GM12878 (cell line): ENCODE measurements at regions of chr1 and their contacts with region 1.

Region 1: DNA sequence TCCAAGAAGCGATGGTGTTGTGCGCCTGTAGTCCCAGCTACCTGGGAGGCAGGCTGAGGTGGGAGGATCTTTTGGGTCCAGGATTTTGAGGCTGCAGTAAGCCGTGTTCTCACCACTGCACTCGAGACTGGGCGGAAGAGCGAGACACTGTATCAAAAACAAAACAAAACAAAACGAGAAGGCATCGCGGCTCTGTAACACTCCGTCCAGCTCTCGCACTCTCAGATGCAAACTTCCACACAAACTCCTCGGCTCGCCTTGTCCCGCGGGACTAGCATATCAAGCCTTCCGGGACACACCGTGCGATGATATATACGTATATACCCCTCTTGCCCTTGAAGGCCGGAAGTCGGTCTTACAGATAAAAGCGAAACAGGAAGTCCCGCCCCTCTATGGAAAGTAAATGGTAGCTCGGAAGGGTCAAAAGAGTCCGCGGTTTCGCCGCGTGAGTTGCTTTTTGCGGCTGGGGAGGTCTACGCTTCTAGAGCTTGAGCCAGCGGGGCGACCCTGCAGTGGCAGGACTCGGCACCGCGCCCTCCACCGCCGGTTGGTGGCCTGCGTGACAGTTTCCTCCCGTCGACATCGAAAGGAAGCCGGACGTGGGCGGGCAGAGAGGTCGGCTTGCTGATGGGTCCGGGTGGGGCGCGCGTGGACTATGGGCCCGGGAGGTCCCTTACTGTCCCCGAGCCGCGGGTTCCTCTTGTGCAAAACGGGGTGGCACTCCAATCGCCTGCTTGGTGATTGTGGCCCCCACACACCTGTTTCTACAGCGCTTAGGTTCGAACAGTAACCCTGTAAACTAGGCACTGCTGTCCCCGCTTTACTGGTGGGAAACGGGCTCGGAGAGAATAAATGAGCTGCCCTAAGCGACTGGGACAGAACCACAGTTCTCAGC is at the start of gene COA6:
- DNase-seq: peak; percentile 94
- ATAC-seq: peak; percentile 93
- H3K4me3 ChIP-seq: peak within 1 kb of the TSS; percentile 86
- H3K27ac ChIP-seq: peak within 1 kb of the TSS; percentile 95
- H3K4me1 ChIP-seq: peaks cover 6% of the 10 kb centered on the region; the same call in 1 of the 2 replicates
- H3K27me3 ChIP-seq: no peaks in the 10 kb centered on the region; a peak in 1 of 4 replicates
- CTCF ChIP-seq: no peak; a peak in 1 of 6 replicates
- EP300 ChIP-seq: 0 out of 4 replicates have a peak, but pooled peaks of 1 of the 2 experiments have one; percentile 25
- POLR2A ChIP-seq: peak; percentile 90
- RAD21 ChIP-seq: no peak
- polyA plus RNA-seq, gene COA6: 117 to 145 TPM

Region 2: DNA sequence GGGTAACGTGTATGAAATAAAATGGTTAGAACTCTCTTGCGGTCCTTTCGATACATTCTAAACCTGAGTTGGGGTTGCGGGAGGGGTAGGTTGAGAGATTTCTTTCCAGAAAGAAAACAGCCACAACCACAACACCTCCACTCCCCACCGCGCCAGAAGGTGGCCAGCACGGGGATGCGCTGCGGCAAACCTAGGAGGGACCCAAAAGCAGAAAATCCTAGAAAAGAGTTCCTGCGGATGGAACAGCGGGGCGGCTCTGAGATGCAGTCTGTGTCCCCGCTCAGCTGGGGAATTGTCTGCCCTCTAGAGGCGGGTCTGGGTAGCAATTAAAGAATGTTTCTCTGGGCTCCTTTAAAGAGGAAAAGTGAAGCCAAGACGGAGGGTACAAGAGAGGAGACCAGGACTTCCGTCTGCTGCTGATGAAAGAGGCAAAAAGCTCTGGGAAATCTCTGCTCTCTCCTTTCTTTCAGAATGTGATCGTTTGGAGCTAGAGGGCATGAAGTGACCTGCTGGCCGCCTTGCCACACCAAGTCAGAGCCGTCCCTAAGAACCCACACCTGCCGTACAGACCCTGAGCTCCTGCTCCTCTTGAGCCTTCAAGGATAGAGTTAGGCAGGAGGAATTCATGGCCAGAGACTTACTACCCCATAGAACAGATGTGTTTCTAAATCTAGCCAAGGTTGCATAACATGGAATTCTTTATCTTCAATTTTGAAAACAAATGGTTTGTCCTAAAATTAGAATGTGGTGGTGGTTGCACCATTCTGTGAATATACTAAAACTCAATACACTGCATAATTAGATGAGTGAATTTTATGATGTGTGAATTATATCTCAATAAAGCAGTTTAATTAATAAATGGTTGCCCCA is 46.6 kb before region 1 on chr1:
- CTCF ChIA-PET with region 1: interaction called, 11 read pairs
- POLR2A ChIA-PET with region 1: no interaction called
- RAD21 ChIA-PET with region 1: interaction called, 3 read pairs
- SMC1A ChIA-PET with region 1: no interaction called
- in situ Hi-C with region 1: no loop called
- intact Hi-C with region 1: no loop called
- DNase-seq: no peak
- ATAC-seq: peak; percentile 92
- H3K4me3 ChIP-seq: no peak overlapping the region
- H3K27ac ChIP-seq: no peak overlapping the region
- H3K4me1 ChIP-seq: peaks cover 5% of the 10 kb centered on the region
- H3K27me3 ChIP-seq: no peaks in the 10 kb centered on the region
- CTCF ChIP-seq: peak; percentile 77 to 87 (median 86)
- EP300 ChIP-seq: no peak
- POLR2A ChIP-seq: no peak
- RAD21 ChIP-seq: peak; percentile 76

Region 3: DNA sequence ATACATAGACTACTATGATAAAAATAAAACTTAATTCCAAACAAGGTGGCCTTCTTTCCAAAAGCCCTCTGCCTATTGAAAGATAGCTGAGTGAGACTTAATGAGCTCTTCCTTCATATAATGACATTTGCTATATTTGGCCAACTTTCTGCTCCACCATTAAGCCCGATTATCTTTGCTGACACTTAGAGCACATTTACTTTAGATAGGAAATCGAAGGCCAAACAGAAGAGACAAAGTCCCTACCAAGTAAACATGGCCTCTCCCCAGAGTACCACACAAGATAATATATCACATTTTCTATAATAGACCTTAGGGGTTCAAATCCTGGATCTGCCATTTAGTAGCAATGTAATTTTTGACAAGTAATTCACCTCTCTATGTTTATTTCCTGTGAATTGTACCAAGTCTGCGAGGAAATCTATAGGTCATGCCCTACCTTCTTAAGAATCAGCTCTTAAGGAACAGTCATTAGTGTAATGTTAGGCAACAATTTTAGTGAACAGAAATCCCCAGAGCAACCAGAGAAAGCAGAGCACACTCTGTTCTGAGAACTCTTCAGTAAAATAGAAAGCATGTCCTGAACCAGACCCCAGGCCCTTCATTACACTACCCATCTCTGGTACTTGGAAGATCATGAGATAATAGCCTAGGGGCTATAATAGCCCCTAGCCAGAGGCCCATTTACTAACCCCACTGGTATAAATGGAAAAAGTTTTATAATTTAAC is 17.4 kb before region 1 on chr1:
- CTCF ChIA-PET with region 1: interaction called, 7 read pairs
- POLR2A ChIA-PET with region 1: interaction called, 16 read pairs
- RAD21 ChIA-PET with region 1: interaction called, 5 read pairs
- SMC1A ChIA-PET with region 1: interaction called, 30 read pairs
- in situ Hi-C with region 1: no loop called
- intact Hi-C with region 1: loop called (anchors 1 kb)
- DNase-seq: no peak
- ATAC-seq: peak; percentile 58
- H3K4me3 ChIP-seq: peak overlapping the region; percentile 51; the same call in 1 of the 2 replicates
- H3K27ac ChIP-seq: no peak overlapping the region
- H3K4me1 ChIP-seq: no peaks in the 10 kb centered on the region; the same call in 1 of the 2 replicates
- H3K27me3 ChIP-seq: no peaks in the 10 kb centered on the region
- CTCF ChIP-seq: no peak
- EP300 ChIP-seq: no peak
- POLR2A ChIP-seq: no peak
- RAD21 ChIP-seq: no peak

Region 4: DNA sequence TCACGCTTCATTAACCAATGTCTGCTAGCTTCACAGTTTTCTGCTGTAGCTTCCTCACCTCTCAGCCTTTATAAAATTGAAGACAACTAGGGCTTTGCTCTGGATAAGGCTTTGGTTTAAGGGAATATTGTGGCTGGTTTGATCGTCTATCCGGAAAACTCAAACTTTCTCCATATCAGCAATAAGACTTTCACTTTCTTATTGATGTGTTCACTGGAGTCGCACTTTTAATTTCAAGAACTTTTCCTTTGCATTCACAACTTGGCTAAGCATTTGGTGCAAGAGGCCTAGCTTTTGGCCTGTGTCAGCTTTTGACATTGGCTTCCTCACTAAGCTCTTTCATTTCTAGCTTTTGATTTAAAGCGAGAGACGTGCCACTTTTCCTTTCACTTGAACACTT is 12.8 kb after region 1 on chr1:
- CTCF ChIA-PET with region 1: interaction called, 8 read pairs
- POLR2A ChIA-PET with region 1: interaction called, 13 read pairs
- RAD21 ChIA-PET with region 1: interaction called, 3 read pairs
- SMC1A ChIA-PET with region 1: interaction called, 12 read pairs
- in situ Hi-C with region 1: no loop called
- intact Hi-C with region 1: no loop called
- DNase-seq: no peak
- ATAC-seq: no peak; the same call in none of the 3 replicates
- H3K4me3 ChIP-seq: peak overlapping the region; percentile 20; the same call in 1 of the 2 replicates
- H3K27ac ChIP-seq: peak overlapping the region; percentile 21
- H3K4me1 ChIP-seq: no peaks in the 10 kb centered on the region
- H3K27me3 ChIP-seq: no peaks in the 10 kb centered on the region
- CTCF ChIP-seq: no peak
- EP300 ChIP-seq: no peak
- POLR2A ChIP-seq: no peak
- RAD21 ChIP-seq: no peak

Region 5: DNA sequence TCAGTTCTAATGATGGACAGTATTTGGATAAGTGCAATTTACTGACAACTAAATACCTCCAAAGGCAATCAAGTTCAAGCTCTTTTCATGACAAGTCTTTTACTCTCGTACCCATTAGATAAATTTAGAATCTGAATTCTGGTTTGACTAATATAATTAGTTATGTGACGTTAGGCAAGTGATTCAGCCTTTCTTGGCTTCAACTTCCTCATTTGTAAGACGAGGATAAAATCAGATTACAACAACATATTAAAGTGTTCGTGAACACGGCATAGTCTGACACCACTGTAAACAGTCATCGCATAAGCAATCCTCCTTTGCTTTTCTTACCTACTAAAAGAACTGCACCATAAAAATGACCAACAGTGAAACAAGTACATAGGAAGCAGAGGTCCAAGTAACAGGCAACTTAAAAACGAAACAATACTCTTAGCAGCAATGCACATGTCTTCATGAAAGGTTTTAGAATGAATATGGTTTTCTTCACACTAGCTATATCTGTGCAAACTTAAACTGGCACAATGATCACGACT is 25.6 kb after region 1 on chr1:
- CTCF ChIA-PET with region 1: interaction called, 10 read pairs
- POLR2A ChIA-PET with region 1: interaction called, 10 read pairs
- RAD21 ChIA-PET with region 1: interaction called, 14 read pairs
- SMC1A ChIA-PET with region 1: interaction called, 24 read pairs
- in situ Hi-C with region 1: no loop called
- intact Hi-C with region 1: loop called (anchors 2 kb)
- DNase-seq: peak; percentile 75
- ATAC-seq: peak; percentile 84
- H3K4me3 ChIP-seq: 0 out of 2 replicates have a peak overlapping the region, but pooled peaks have one; percentile 35
- H3K27ac ChIP-seq: peak overlapping the region; percentile 98
- H3K4me1 ChIP-seq: peaks cover 20% of the 10 kb centered on the region
- H3K27me3 ChIP-seq: no peaks in the 10 kb centered on the region
- CTCF ChIP-seq: no peak
- EP300 ChIP-seq: peak in 1 of 2 experiments; percentile 77; a peak in 2 of 4 replicates
- POLR2A ChIP-seq: no peak
- RAD21 ChIP-seq: no peak

Region 6: GRCh38 chr1:234413990-234414389 is 40.7 kb after region 1 on chr1:
- CTCF ChIA-PET with region 1: no interaction called
- POLR2A ChIA-PET with region 1: no interaction called
- RAD21 ChIA-PET with region 1: no interaction called
- SMC1A ChIA-PET with region 1: no interaction called
- in situ Hi-C with region 1: no loop called
- intact Hi-C with region 1: no loop called
- DNase-seq: no peak
- ATAC-seq: no peak
- H3K4me3 ChIP-seq: no peak overlapping the region
- H3K27ac ChIP-seq: no peak overlapping the region
- H3K4me1 ChIP-seq: no peaks in the 10 kb centered on the region
- H3K27me3 ChIP-seq: no peaks in the 10 kb centered on the region
- CTCF ChIP-seq: no peak
- EP300 ChIP-seq: no peak
- POLR2A ChIP-seq: no peak
- RAD21 ChIP-seq: no peak

Region 7: DNA sequence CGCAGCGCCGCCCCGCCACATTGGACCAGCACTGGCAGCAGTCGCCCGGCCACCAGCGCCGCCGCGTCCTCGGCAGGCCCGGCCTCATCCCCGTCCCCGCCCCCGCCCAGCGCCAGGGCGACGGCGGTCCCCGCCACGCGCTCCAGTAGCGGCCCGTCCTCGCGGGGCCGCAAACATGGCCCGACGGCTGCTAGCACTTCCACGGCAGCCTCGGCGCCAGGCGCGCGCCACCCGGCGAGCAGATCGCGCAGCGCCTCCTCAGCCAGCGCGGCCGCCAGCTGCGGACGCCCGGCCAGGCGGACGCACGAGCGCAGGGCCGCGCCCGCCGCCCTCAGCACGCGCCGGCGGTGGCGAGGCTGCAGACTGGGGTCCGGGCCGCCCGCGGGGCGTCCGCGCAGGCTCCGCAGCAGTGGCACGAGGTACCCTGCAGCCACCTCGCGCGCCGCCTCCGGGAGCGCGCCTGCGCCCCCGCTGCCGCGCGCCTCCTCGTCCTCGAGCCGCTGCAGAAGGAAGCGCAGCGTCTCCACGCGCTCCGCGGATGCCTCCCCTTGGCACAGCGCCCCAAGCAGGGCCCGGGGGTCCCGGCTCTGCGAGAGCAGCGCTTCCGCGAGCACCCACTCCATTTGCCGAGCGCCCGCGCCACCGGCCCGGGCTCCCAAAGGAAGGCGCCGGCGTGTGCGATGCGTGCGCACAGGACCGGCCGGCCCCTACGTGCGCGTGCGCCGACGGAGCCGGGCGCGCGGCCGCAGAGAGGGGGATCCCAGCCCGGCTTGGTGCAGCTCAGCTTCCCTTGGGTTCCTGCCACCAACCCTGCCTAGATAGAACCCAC is 105.4 kb after region 1 on chr1 and contains the start of gene TARBP1:
- CTCF ChIA-PET with region 1: interaction called, 3 read pairs
- POLR2A ChIA-PET with region 1: interaction called, 4 read pairs
- RAD21 ChIA-PET with region 1: interaction called, 6 read pairs
- SMC1A ChIA-PET with region 1: interaction called, 4 read pairs
- in situ Hi-C with region 1: no loop called
- intact Hi-C with region 1: loop called (anchors 2 kb)
- DNase-seq: no peak
- ATAC-seq: peak; percentile 83
- H3K4me3 ChIP-seq: peak within 1 kb of the TSS; percentile 96
- H3K27ac ChIP-seq: peak within 1 kb of the TSS; percentile 78
- H3K4me1 ChIP-seq: peaks cover 25% of the 10 kb centered on the region
- H3K27me3 ChIP-seq: no peaks in the 10 kb centered on the region
- CTCF ChIP-seq: peak; percentile 12 to 41 (median 24); a peak in 3 of 6 replicates
- EP300 ChIP-seq: no peak
- POLR2A ChIP-seq: peak; percentile 74
- RAD21 ChIP-seq: no peak
- polyA plus RNA-seq, gene TARBP1: 22.0 to 26.2 TPM

Region 8: GRCh38 chr1:234599617-234600417 is 226.5 kb after region 1 on chr1:
- CTCF ChIA-PET with region 1: no interaction called
- POLR2A ChIA-PET with region 1: no interaction called
- RAD21 ChIA-PET with region 1: interaction called, 3 read pairs
- SMC1A ChIA-PET with region 1: interaction called, 3 read pairs
- in situ Hi-C with region 1: no loop called
- intact Hi-C with region 1: loop called (anchors 10 kb)
- DNase-seq: no peak
- ATAC-seq: peak; percentile 76
- H3K4me3 ChIP-seq: peak overlapping the region; percentile 67; the same call in 1 of the 2 replicates
- H3K27ac ChIP-seq: peak overlapping the region; percentile 75
- H3K4me1 ChIP-seq: peaks cover 22% of the 10 kb centered on the region
- H3K27me3 ChIP-seq: no peaks in the 10 kb centered on the region
- CTCF ChIP-seq: 0 out of 6 replicates have a peak, but pooled peaks of 1 of the 3 experiments have one; percentile 5
- EP300 ChIP-seq: 0 out of 4 replicates have a peak, but pooled peaks of 1 of the 2 experiments have one; percentile 42
- POLR2A ChIP-seq: peak; percentile 70; the same call in 1 of the 2 replicates
- RAD21 ChIP-seq: no peak